AG04449 (cell line): ENCODE measurements at regions of chr3 and their contacts with region 1.

Region 1: DNA sequence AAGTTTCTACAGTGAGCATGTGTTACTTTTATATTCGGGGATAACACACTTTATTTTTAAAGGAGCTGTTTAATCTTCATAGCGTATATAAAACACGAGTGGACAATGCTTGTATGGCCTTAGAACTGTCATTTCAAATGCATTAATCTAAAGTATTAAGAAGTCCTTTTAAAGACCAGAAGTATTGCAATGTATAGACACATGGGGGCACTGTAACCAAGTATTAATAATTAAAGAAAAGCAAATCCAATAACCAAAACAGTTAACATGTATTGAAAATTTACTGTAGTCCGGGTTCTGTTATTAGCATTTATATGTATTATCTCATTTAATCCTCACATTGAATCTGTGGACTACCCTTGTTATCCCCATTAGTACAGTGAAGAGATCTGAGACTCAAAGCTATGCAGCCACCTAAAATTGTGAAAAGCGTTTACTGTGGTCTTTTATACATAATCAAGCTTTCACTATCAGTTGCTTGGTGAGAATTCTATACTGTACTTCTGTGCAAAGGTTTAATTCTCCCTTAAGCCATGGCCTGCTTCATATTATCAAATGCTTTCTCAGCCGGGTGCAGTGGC is 10.1 kb downstream of the ARL14 start:
- DNase-seq: no peak
- H3K4me3 ChIP-seq: no peak overlapping the region
- CTCF ChIP-seq: peak; percentile 18

Region 2: GRCh38 chr3:160676547-160677303 is 10.3 kb before region 1 on chr3 and contains the start of gene ARL14:
- CTCF ChIA-PET with region 1: interaction called, 31 read pairs
- POLR2A ChIA-PET with region 1: no interaction called
- DNase-seq: no peak
- H3K4me3 ChIP-seq: no peak within 1 kb of the TSS
- CTCF ChIP-seq: no peak

Region 3: GRCh38 chr3:160697628-160698382 is 10.8 kb after region 1 on chr3:
- CTCF ChIA-PET with region 1: interaction called, 45 read pairs
- POLR2A ChIA-PET with region 1: interaction called, 3 read pairs
- DNase-seq: peak; percentile 41
- H3K4me3 ChIP-seq: no peak overlapping the region
- CTCF ChIP-seq: no peak

Region 4: DNA sequence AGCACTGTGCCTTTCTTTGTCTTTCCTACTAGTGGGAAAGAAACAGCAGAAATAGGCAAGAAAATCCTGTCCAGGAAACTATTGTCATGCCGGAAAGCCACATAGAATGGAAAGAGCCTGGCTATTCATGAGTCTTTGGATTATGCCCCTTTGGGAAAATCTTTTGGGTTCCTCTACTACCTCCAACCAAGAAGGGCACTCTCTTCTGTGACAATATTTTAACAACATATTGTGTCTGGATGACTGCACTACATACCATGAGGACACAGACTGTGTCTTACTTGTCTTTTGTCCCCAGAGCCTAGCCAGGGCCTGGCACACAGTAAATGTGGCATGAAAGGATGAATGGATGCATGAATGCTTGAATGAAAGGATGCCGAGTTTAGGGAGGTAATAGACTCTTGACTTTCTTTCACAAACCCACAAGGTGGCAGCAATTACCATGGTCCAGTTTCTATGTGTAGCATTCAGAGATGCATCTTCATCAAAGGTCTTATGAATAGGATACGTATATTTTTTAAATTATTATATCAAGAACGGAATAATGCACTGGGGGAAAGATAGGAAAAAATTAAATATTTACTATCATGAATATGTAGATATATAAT is 20.2 kb after region 1 on chr3:
- CTCF ChIA-PET with region 1: interaction called, 10 read pairs
- POLR2A ChIA-PET with region 1: no interaction called
- DNase-seq: no peak
- H3K4me3 ChIP-seq: no peak overlapping the region
- CTCF ChIP-seq: peak; percentile 48